G401 (cell line): ENCODE measurements at regions of chr9 and their contacts with region 1.

Region 1: GRCh38 chr9:124771021-124771866 is at the start of gene NR6A1:
- DNase-seq: peak; percentile 96
- total RNA-seq, gene NR6A1: 25.4 and 32.1 TPM in 2 replicates

Region 2: GRCh38 chr9:124708633-124709291 is 62.5 kb before region 1 on chr9:
- in situ Hi-C with region 1: no loop called
- DNase-seq: no peak

Region 3: GRCh38 chr9:124894741-124895170 is 123.5 kb after region 1 on chr9:
- in situ Hi-C with region 1: loop called (anchors 25 kb)
- DNase-seq: peak; percentile 61